CD4-positive, alpha-beta memory T cell (primary cell): ENCODE measurements at regions of chr10 and their contacts with region 1.

Region 1: GRCh38 chr10:84328418-84329195 is at the start of gene CCSER2:
- DNase-seq: peak; percentile 87 to 93 (median 89)
- H3K4me3 ChIP-seq: peak within 1 kb of the TSS; percentile 61 to 64
- H3K4me3 Mint-ChIP-seq: peak within 1 kb of the TSS; percentile 90 to 97 (median 96)
- H3K27ac ChIP-seq: peak within 1 kb of the TSS; percentile 98
- H3K27ac Mint-ChIP-seq: peak within 1 kb of the TSS; percentile 97 to 100 (median 99)
- H3K4me1 ChIP-seq: peaks cover 39% of the 10 kb centered on the region
- H3K4me1 Mint-ChIP-seq: peaks cover 24 to 47% (median 30%) of the 10 kb centered on the region in 4 donors
- H3K27me3 ChIP-seq: no peaks in the 10 kb centered on the region
- H3K27me3 Mint-ChIP-seq: peaks cover 0 to 2% of the 10 kb centered on the region in 2 donors
- total RNA-seq, gene CCSER2: 144 to 151 TPM

Region 2: GRCh38 chr10:84375011-84375410 is 46.4 kb after region 1 on chr10:
- CTCF ChIA-PET with region 1: interaction called, 3 read pairs
- POLR2A ChIA-PET with region 1: no interaction called
- intact Hi-C with region 1: loop called (anchors 2 kb)
- DNase-seq: peak; percentile 35 to 57 (median 51)
- H3K4me3 ChIP-seq: no peak overlapping the region
- H3K4me3 Mint-ChIP-seq: peak overlapping the region in 2 of 8 donors; percentile 7 to 45
- H3K27ac ChIP-seq: no peak overlapping the region
- H3K27ac Mint-ChIP-seq: peak overlapping the region; percentile 1 to 61 (median 29)
- H3K4me1 ChIP-seq: peaks cover 8% of the 10 kb centered on the region
- H3K4me1 Mint-ChIP-seq: peaks cover 26 to 58% (median 29%) of the 10 kb centered on the region in 4 donors
- H3K27me3 ChIP-seq: no peaks in the 10 kb centered on the region
- H3K27me3 Mint-ChIP-seq: no peaks in the 10 kb centered on the region